MCF 10A (cell line): ENCODE measurements at regions of chr10 and their contacts with region 1.

Region 1: DNA sequence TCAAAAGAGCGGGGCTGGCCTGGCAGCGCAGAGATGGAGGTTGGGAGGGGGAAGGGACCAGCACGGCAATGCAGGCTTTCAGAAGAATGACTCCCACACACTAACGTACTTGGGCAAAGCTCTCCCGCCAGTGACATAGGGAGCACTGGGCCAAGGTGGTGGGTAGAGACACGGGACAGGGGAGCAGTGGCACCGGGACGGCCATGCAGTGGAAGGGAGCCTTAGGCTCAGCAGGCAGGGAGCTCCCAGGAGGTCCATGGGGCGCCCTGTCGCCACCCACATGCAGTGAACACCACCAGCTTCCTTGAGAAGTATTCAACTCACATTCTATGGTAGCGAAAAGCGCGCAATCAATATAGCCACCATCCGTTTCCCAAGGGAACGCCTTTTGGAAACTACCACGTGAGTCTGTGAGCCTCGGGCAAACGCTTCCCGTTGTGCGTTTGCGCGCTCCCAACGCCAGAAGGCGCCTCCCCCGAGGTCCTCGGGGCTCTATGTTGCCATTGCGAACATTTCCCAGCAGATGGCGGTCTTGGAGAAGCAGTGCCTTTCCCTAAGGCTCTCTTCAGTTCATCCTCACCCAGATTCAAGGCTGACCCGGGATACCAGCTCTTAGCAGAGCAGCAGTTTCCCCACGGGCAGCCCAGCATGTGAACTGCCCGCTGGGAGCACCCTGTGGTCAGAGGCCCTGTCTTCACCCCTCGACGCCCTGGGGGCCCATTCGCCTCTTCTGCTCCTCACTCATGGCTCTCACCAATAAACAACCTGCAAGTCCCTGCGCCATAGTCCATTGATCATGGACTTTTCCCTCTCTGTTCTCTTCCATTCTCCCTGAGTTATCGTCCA is 16.4 kb upstream of the OPALIN start:
- DNase-seq: peak; percentile 94
- H3K4me3 Mint-ChIP-seq: peak overlapping the region; percentile 66
- H3K27ac Mint-ChIP-seq: no peak overlapping the region
- H3K4me1 Mint-ChIP-seq: peaks cover 15% of the 10 kb centered on the region
- H3K27me3 Mint-ChIP-seq: no peaks in the 10 kb centered on the region
- CTCF ChIP-seq: peak; percentile 95

Region 2: GRCh38 chr10:96339957-96340904 is 35.0 kb before region 1 on chr10:
- CTCF ChIA-PET with region 1: interaction called, 33 read pairs
- POLR2A ChIA-PET with region 1: no interaction called
- intact Hi-C with region 1: loop called (anchors 2 kb)
- DNase-seq: peak; percentile 75
- H3K4me3 Mint-ChIP-seq: no peak overlapping the region
- H3K27ac Mint-ChIP-seq: no peak overlapping the region
- H3K4me1 Mint-ChIP-seq: no peaks in the 10 kb centered on the region
- H3K27me3 Mint-ChIP-seq: peaks cover 12% of the 10 kb centered on the region
- CTCF ChIP-seq: peak; percentile 83

Region 3: DNA sequence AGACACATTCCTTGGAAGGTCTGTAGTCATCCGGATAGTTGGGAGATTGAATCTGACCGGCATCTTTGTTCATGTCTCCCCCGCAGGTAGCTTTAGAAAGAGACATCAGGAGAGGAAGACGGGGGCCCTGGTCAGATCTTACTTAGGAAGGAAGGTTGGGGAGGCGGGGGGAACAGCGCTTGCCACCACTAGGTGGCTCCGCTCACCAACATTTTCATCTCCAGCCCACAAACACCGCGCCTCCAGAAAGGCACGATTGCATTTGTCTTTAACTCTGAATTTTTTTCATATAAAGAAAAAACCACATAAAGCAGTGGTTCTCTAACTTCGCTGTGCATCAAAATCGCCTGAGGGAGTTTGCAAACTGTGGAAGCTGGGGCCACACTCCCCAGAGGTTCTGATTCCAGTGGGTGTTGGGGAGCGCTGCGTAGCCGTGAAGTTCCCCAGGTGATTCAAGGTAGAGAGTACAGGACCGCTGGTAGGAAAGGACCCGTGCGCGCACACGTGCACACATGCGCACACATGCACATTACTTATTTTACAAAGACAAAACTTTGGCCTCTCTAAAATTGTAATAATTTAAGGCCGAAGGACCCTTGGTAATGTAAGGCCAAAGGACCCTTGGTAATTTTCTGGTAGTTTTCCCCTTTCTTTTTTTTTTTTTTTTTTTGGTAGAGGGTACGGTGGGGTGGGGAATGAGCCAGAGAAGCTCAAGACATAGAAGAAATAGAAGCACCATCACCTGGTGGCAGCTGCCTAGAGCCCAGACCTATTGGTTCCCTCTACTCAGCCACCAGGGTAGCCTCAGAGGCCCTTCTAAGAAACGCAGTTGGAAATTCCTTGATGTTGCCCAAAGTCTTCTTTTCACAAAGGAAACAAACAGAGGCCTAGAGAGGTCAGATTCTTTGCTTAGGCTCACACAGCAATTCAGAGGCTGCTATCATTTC is 21.0 kb after region 1 on chr10:
- CTCF ChIA-PET with region 1: interaction called, 72 read pairs
- POLR2A ChIA-PET with region 1: no interaction called
- intact Hi-C with region 1: no loop called
- DNase-seq: peak; percentile 65
- H3K4me3 Mint-ChIP-seq: no peak overlapping the region
- H3K27ac Mint-ChIP-seq: no peak overlapping the region
- H3K4me1 Mint-ChIP-seq: no peaks in the 10 kb centered on the region
- H3K27me3 Mint-ChIP-seq: peaks cover 71% of the 10 kb centered on the region
- CTCF ChIP-seq: peak; percentile 76

Region 4: GRCh38 chr10:96548589-96548988 is 173.4 kb after region 1 on chr10:
- CTCF ChIA-PET with region 1: interaction called, 13 read pairs
- POLR2A ChIA-PET with region 1: no interaction called
- intact Hi-C with region 1: no loop called
- DNase-seq: no peak
- H3K4me3 Mint-ChIP-seq: no peak overlapping the region
- H3K27ac Mint-ChIP-seq: no peak overlapping the region
- H3K4me1 Mint-ChIP-seq: peaks cover 8% of the 10 kb centered on the region
- H3K27me3 Mint-ChIP-seq: no peaks in the 10 kb centered on the region
- CTCF ChIP-seq: no peak